Mammary epithelial cell (primary cell): ENCODE measurements at regions of chr1 and their contacts with region 1.

Region 1: DNA sequence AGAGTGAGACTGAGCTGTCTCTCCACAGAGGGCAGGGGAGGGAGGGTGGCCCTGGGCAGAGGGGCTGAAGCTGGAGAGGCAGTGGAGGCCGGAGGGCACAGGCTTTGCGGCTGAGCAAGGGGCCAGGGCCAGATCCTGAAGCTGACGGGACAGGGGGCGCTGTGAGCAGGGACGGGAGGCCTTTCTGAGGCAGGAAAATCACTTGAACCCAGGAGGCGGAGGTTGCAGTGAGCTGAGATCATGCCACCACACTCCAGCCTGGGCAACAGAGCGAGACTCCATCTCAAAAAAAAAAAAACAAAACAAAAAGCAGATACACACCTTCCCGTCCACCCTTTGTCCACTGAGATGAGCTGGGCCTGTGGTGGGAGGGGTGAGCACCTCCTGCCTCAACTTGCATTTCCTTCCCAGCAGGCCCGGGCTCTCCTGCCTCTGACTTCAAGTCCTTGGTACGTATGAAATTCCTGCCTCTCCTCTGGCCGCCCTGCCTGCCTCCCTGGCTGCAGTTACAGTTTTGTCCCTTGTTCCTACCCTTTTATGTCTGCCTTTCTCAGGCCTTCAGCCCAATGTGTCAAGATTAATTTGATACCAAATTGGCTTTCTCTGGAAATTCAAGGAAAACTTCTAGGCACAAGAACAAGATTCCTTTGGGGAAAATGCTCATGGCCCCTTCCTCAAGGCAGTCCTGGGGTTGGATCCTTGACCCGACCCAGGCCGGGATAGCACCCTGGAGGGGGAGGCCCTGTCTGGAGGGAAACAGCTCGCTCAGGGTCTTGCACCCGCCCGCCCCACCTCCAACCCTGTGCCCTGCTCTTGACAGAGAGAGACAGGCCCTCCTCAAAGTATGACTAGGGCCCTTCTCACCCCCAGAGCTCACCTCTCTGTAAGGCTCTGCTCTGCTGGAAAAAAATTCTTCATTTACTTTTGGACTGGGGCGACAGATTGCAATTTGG is 11.2 kb upstream of the ADAMTSL4 start:
- DNase-seq: peak; percentile 74
- H3K4me3 ChIP-seq: no peak overlapping the region
- H3K27ac ChIP-seq: peak overlapping the region; percentile 49
- H3K4me1 ChIP-seq: peaks cover 24% of the 10 kb centered on the region
- H3K27me3 ChIP-seq: no peaks in the 10 kb centered on the region
- CTCF ChIP-seq: no peak

Region 2: DNA sequence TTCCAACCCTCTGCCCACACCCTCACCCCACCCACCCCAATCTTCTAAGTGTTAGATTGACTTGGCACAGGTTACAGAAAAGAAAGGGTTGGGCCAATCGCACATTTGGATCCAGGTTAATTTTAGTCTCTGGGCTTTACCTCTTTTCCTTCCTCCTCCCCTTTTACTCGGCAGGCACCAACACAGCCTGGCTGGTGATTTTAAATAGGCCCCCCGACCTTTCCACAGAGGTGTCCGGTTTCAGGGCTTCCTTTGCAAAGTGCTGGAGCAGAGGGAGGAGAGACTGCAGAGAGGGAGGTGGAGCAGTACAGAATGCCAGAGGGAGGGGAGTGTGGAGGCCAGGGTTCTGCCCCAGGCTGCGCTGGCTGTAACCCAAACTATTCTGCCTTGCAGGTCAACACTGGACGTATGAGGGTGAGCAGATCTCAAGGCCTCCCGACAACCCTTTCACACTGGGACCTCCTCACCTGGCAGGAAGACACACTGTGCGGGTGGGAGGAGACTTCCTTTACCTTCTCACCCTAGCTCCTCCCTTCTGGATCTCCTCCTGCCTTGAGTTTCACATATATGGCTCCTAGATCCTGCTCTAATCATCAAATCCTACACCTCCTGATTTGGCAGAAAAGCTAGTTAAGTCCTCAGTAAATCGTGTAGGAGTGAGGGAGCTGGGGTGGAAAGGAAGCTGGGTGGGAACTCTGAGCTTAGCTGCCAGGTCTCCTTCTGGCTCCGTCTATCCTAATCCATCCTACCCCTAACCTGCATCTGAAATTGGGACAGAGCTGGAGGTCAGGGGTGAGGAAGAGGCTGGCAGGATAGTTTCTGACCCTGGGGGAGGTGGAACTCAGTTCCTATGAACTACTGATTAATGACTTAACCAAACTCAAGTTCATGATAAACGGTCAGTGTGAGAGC is 278.0 kb before region 1 on chr1:
- CTCF ChIA-PET with region 1: no interaction called
- dilution Hi-C with region 1: no loop called
- in situ Hi-C with region 1: loop called (anchors 10 to 25 kb)
- intact Hi-C with region 1: loop called (anchors 5 kb)
- DNase-seq: peak; percentile 56
- H3K4me3 ChIP-seq: peak overlapping the region in 2 of 3 experiments; percentile 2 to 11
- H3K27ac ChIP-seq: peak overlapping the region; percentile 19
- H3K4me1 ChIP-seq: peaks cover 45% of the 10 kb centered on the region
- H3K27me3 ChIP-seq: no peaks in the 10 kb centered on the region
- CTCF ChIP-seq: no peak

Region 3: DNA sequence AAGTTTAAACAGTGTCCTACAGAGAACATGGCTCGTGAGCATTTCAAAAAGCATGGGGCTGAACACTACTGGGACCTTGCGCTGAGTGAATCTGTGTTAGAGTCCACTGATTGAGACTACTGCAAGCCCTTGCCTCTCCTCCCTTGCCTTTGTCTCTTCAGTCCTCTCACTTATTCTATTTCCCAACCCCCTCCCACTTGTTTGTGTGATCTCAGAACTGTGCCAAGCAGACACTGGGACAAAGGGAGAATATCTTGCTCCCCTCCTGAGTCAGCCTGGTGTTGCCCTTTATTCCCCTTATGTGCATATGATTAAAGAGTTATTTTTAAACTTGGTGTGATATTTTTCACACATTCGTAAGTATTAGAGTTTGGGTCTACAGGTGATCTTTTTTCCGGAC is 185.1 kb before region 1 on chr1:
- CTCF ChIA-PET with region 1: no interaction called
- dilution Hi-C with region 1: no loop called
- in situ Hi-C with region 1: no loop called
- intact Hi-C with region 1: no loop called
- DNase-seq: no peak
- H3K4me3 ChIP-seq: no peak overlapping the region
- H3K27ac ChIP-seq: no peak overlapping the region
- H3K4me1 ChIP-seq: no peaks in the 10 kb centered on the region
- H3K27me3 ChIP-seq: no peaks in the 10 kb centered on the region
- CTCF ChIP-seq: no peak

Region 4: GRCh38 chr1:150363426-150364230 is 174.4 kb before region 1 on chr1 and contains the start of gene RPRD2:
- CTCF ChIA-PET with region 1: no interaction called
- dilution Hi-C with region 1: no loop called
- in situ Hi-C with region 1: no loop called
- intact Hi-C with region 1: loop called (anchors 10 kb)
- DNase-seq: peak; percentile 99
- H3K4me3 ChIP-seq: peak within 1 kb of the TSS; percentile 78 to 99 (median 96)
- H3K27ac ChIP-seq: peak within 1 kb of the TSS; percentile 94
- H3K4me1 ChIP-seq: peaks cover 6% of the 10 kb centered on the region
- H3K27me3 ChIP-seq: no peaks in the 10 kb centered on the region
- CTCF ChIP-seq: peak in 1 of 2 donors; percentile 5
- total RNA-seq, gene RPRD2: 12.7 to 22.7 TPM

Region 5: DNA sequence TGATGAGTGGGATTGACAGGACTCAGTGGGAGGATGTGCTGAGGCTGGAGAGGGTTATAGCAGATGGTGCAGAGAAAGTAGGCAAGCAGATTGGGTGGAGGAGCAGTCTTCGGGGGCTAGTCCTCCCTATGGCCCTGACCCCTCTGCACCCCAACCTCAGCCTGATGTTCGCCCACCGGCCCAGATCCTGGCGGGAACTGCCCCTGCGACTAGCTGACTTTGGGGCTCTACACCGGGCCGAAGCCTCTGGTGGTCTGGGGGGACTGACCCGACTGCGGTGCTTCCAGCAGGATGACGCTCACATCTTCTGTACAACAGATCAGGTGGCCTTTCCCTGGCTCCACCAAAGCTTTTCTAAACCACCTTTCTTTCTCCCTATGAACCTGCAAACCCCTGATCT is 39.7 kb before region 1 on chr1:
- CTCF ChIA-PET with region 1: no interaction called
- dilution Hi-C with region 1: no loop called
- in situ Hi-C with region 1: no loop called
- intact Hi-C with region 1: no loop called
- DNase-seq: no peak
- H3K4me3 ChIP-seq: no peak overlapping the region
- H3K27ac ChIP-seq: no peak overlapping the region
- H3K4me1 ChIP-seq: no peaks in the 10 kb centered on the region
- H3K27me3 ChIP-seq: no peaks in the 10 kb centered on the region
- CTCF ChIP-seq: no peak

Region 6: DNA sequence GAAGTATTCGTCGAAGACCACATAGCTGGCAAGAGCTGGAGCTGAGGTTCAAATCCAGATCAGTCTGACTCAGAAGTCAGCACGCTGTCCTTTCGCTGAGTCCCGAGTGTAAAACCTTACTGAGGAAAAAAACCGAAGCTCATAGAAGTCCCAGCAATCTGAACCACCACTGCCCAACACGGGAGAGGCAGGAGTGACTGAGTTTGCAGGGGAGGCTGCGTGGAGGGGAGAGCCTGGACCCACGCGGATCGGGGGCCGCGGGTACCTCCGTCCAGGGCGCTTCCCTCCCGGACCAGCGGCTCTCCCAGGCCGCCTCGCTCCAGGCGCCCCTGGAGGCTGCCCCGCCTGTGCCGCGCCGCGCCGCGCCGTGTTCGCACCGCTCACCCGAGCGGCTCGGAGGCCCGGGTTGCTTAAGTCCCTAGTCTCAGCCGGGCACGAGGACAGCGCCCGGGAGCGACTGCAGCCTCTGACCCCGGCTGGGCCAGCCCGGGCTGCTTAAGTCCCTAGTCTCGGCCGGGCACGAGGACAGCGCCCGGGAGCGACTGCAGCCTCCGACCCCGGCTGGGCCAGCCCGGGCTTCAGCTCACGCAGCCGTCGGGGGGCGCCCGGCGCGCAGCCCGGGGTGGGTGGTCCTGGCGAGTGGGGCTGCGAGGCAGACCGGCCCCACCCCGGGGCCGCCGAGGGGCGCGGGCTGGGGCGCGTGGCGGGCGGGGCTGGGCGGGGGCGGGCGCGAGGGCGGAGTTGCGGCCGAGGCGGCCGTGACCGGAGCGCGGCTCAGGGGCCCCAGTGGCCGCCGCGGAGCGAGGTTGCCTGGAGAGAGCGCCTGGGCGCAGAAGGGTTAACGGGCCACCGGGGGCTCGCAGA is 10.9 kb after region 1 on chr1 and contains the start of gene ADAMTSL4:
- CTCF ChIA-PET with region 1: no interaction called
- dilution Hi-C with region 1: no loop called
- in situ Hi-C with region 1: no loop called
- intact Hi-C with region 1: loop called (anchors 1 kb)
- DNase-seq: peak; percentile 60
- H3K4me3 ChIP-seq: peak within 1 kb of the TSS; percentile 50 to 63 (median 61)
- H3K27ac ChIP-seq: peak within 1 kb of the TSS; percentile 37
- H3K4me1 ChIP-seq: peaks cover 13% of the 10 kb centered on the region
- H3K27me3 ChIP-seq: no peaks in the 10 kb centered on the region
- CTCF ChIP-seq: peak in 1 of 2 donors; percentile 11
- total RNA-seq, gene ADAMTSL4: 2.9 to 98.0 TPM

Region 7: GRCh38 chr1:150567717-150568593 is 29.9 kb after region 1 on chr1:
- CTCF ChIA-PET with region 1: no interaction called
- dilution Hi-C with region 1: no loop called
- in situ Hi-C with region 1: no loop called
- intact Hi-C with region 1: no loop called
- DNase-seq: peak; percentile 97
- H3K4me3 ChIP-seq: peak overlapping the region in 1 of 3 experiments; percentile 0
- H3K27ac ChIP-seq: peak overlapping the region; percentile 88
- H3K4me1 ChIP-seq: peaks cover 69% of the 10 kb centered on the region
- H3K27me3 ChIP-seq: no peaks in the 10 kb centered on the region
- CTCF ChIP-seq: no peak

Region 8: GRCh38 chr1:150931773-150932172 is 393.8 kb after region 1 on chr1:
- CTCF ChIA-PET with region 1: interaction called, 10 read pairs
- dilution Hi-C with region 1: no loop called
- in situ Hi-C with region 1: no loop called
- intact Hi-C with region 1: no loop called
- DNase-seq: peak; percentile 24
- H3K4me3 ChIP-seq: no peak overlapping the region
- H3K27ac ChIP-seq: no peak overlapping the region
- H3K4me1 ChIP-seq: peaks cover 5% of the 10 kb centered on the region
- H3K27me3 ChIP-seq: no peaks in the 10 kb centered on the region
- CTCF ChIP-seq: no peak